A549 (cell line): ENCODE measurements at regions of chr19 and their contacts with region 1.

Region 1: DNA sequence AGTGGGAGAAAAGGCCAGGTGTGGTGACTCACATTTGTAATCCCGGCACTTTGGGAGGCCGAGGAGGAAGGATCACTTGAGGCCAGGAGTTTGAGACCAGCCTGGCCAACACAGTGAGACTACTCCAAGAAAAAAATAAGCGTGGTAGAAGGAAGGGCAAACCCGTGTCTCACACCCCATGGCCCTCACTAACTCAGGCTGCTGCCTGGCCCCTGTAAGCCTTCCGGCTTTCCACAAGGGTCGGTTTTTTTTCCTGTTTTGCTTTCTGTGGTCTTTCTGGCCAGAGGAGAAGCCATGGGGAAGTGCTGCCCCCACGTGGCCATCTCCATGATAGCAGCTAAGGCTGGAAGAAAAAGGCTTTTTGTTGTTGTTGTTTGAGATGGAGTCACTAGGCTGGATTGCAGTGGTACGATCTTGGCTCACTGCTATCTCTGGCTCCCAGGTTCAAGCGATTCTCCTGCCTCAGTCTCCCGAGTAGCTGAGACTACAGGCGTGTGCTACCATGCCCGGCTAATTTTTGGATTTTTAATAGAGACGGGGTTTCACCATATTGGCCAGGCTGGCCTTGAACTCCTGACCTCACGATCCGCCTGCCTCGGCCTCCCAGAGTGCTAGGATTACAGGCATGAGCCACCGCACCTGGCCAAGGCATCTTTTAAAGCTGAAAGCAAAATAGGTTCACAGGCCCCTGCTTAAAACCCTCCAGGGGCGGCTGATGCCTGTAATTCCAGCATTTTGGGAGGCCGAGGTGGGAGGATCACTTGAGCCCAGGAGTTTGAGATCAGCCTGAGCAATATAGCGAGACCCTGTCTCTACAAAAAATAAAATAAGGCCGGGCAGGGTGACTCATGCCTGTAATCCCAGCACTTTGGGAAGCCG is 7.5 kb upstream of the ARHGEF18 start:
- DNase-seq: peak; percentile 29 to 69
- ATAC-seq: peak; percentile 47 to 71; a peak in 4 of 6 replicates
- H3K4me3 ChIP-seq: no peak overlapping the region
- H3K27ac ChIP-seq: no peak overlapping the region
- H3K4me1 ChIP-seq: no peaks in the 10 kb centered on the region
- CTCF ChIP-seq: peak; percentile 85
- EP300 ChIP-seq: no peak
- POLR2A ChIP-seq: no peak
- RAD21 ChIP-seq: peak; percentile 89 to 93

Region 2: GRCh38 chr19:7098701-7099596 is 242.2 kb before region 1 on chr19:
- CTCF ChIA-PET with region 1: interaction called, 49 read pairs
- POLR2A ChIA-PET with region 1: interaction called, 3 read pairs
- DNase-seq: peak; percentile 70 to 86
- ATAC-seq: peak; percentile 89 to 96
- H3K4me3 ChIP-seq: peak overlapping the region; percentile 50
- H3K27ac ChIP-seq: peak overlapping the region; percentile 78 to 96
- H3K4me1 ChIP-seq: 0 out of 3 replicates have a peak, but pooled peaks cover 3% of the 10 kb centered on the region
- CTCF ChIP-seq: no peak
- EP300 ChIP-seq: no peak
- POLR2A ChIP-seq: peak; percentile 51
- RAD21 ChIP-seq: no peak

Region 3: GRCh38 chr19:7149956-7150705 is 191.1 kb before region 1 on chr19:
- CTCF ChIA-PET with region 1: interaction called, 31 read pairs
- POLR2A ChIA-PET with region 1: no interaction called
- DNase-seq: no peak
- ATAC-seq: peak in 1 of 2 experiments; percentile 34; a peak in 1 of 6 replicates
- H3K4me3 ChIP-seq: no peak overlapping the region
- H3K27ac ChIP-seq: no peak overlapping the region
- H3K4me1 ChIP-seq: no peaks in the 10 kb centered on the region
- CTCF ChIP-seq: no peak
- EP300 ChIP-seq: no peak
- POLR2A ChIP-seq: no peak
- RAD21 ChIP-seq: no peak

Region 4: GRCh38 chr19:7328647-7329046 is 12.6 kb before region 1 on chr19:
- CTCF ChIA-PET with region 1: interaction called, 10 read pairs
- POLR2A ChIA-PET with region 1: no interaction called
- DNase-seq: no peak
- ATAC-seq: no peak
- H3K4me3 ChIP-seq: no peak overlapping the region
- H3K27ac ChIP-seq: no peak overlapping the region
- H3K4me1 ChIP-seq: no peaks in the 10 kb centered on the region
- CTCF ChIP-seq: no peak
- EP300 ChIP-seq: no peak
- POLR2A ChIP-seq: no peak
- RAD21 ChIP-seq: no peak

Region 5: DNA sequence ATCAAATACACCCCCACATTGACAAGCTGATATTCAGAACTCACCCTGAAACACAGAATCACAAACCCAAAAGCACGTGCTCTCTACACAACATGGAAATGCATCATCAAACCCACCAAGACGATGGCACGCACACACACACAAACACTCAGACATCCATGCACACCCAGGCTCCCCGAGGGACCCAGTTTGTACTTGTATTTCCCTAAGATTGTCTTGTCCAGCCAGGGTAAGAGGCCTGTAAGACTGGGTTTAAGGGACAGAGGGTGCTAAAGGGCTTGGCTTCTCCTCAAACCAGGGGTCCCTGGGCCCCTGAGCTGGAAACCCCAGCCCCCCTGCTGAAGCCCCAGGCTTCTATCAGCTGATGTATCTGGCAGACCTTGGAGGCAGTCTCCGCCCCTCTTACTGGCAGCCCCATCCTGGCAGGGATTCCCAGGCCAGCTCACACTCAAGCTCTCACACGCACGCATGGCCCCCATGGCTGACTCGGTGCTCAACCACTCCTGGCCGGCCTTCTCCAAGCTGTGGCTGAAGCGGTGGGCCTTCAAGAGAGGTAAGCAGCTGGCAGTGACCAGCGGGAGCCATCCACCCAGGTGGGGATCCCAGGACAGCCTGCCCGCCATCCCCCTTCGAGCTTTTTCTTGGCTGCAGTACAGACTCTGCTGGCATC is 14.1 kb after region 1 on chr19:
- CTCF ChIA-PET with region 1: interaction called, 19 read pairs
- POLR2A ChIA-PET with region 1: interaction called, 3 read pairs
- DNase-seq: no peak
- ATAC-seq: peak in 1 of 2 experiments; percentile 36; a peak in 2 of 6 replicates
- H3K4me3 ChIP-seq: no peak overlapping the region
- H3K27ac ChIP-seq: no peak overlapping the region
- H3K4me1 ChIP-seq: no peaks in the 10 kb centered on the region
- CTCF ChIP-seq: no peak
- EP300 ChIP-seq: no peak
- POLR2A ChIP-seq: no peak
- RAD21 ChIP-seq: no peak

Region 6: DNA sequence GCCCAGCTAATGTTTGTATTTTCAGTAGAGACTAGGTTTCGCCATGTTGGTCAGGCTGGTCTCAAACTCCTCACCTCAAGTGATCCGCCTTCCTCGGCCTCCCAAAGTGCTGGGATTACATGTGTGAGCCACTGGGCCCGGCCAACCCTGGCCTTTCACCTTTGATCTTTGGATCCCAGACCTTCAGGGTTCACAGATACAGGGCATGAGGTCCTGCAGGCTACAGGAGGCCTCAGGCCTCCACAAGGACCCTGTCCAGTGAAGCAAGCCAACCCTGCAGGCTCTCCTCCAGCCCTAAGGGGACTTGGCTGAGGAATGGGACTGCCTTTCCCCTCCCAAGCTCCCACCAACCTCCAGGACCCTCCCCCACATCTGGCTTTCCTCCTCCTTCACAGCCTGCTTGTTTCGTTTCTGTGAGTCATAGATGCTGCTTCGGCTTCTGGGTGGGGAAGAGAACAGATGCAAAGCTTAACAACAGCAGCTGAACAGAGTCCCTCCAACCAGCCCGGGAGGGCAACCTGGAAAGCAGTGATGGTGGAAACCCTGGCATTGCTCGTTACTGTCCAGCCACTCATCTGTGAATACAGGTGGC is 19.3 kb after region 1 on chr19:
- CTCF ChIA-PET with region 1: interaction called, 19 read pairs
- POLR2A ChIA-PET with region 1: interaction called, 3 read pairs
- DNase-seq: no peak
- ATAC-seq: no peak
- H3K4me3 ChIP-seq: no peak overlapping the region
- H3K27ac ChIP-seq: no peak overlapping the region
- H3K4me1 ChIP-seq: no peaks in the 10 kb centered on the region
- CTCF ChIP-seq: no peak
- EP300 ChIP-seq: no peak
- POLR2A ChIP-seq: no peak
- RAD21 ChIP-seq: no peak

Region 7: DNA sequence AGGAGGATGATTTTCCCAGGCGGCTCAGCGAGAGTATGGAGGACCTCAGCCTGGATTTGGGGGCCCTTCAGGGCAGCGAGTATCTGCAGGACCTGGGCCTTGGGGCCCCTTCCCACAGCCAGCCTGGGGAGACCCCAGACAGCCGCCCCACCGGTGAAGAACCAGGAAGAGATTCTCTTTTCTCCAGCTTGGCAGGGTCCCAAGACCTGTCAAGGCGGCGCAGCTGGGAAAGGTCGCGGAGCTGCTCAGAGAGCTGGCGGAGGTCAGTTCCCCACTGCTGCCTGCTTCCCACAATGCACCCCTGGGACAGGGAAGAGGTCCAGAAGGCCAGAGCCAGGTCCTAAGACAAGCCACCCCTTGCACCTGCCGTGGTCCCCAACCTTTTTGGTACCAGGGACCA is 31.6 kb after region 1 on chr19:
- CTCF ChIA-PET with region 1: no interaction called
- POLR2A ChIA-PET with region 1: no interaction called
- DNase-seq: no peak
- ATAC-seq: no peak
- H3K4me3 ChIP-seq: no peak overlapping the region
- H3K27ac ChIP-seq: no peak overlapping the region
- H3K4me1 ChIP-seq: no peaks in the 10 kb centered on the region
- CTCF ChIP-seq: no peak
- EP300 ChIP-seq: no peak
- POLR2A ChIP-seq: no peak
- RAD21 ChIP-seq: no peak

Region 8: GRCh38 chr19:7428651-7429113 is 87.5 kb after region 1 on chr19:
- CTCF ChIA-PET with region 1: no interaction called
- POLR2A ChIA-PET with region 1: no interaction called
- DNase-seq: no peak
- ATAC-seq: no peak
- H3K4me3 ChIP-seq: no peak overlapping the region
- H3K27ac ChIP-seq: no peak overlapping the region
- H3K4me1 ChIP-seq: peaks cover 15% of the 10 kb centered on the region; the same call in 1 of the 3 replicates
- CTCF ChIP-seq: no peak
- EP300 ChIP-seq: no peak
- POLR2A ChIP-seq: no peak
- RAD21 ChIP-seq: no peak